Activated CD4-positive, alpha-beta memory T cell treated with anti-CD3 and anti-CD28 coated beads, Interleukin-2, amount 10 ng/mL, durations not matched to agents 7 days and 5 days (primary cell): ENCODE measurements at regions of chr3 and their contacts with region 1.

Region 1: DNA sequence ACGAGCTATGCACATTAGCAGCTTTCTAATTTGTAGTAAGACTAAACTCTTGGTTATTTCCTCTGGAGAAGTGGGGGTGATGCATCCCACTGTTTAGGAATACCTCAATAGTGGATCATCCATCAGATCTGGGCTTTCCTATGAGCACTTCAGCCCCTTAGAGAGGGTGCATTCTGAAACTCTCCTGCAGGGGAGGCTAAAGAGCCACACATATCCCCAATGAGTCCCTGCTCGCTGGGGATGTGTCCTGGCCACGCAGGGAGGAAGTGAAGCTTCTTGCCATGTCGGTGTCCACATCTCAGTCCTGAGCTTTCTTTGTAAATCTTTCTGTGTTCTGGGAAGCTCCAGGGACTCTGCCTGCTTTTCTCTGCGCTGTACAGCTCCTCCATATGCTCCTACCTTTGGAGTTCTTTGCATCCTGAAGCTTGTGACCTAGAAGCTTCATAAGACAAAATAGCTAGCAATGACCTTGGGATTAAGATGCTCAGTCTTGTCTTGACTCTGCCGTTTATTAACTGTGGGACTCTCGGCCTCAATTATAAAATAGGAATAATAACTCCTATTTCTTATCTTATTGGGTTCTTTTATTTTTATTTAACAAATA is 28.3 kb upstream of the MASP1 start:
- DNase-seq: peak; percentile 69
- H3K4me3 Mint-ChIP-seq: no peak overlapping the region
- H3K27ac Mint-ChIP-seq: no peak overlapping the region
- H3K4me1 Mint-ChIP-seq: peaks cover 11% of the 10 kb centered on the region
- H3K27me3 Mint-ChIP-seq: peaks cover 37% of the 10 kb centered on the region

Region 2: GRCh38 chr3:187406927-187407326 is 87.1 kb after region 1 on chr3:
- CTCF ChIA-PET with region 1: interaction called, 13 read pairs
- POLR2A ChIA-PET with region 1: no interaction called
- DNase-seq: no peak
- H3K4me3 Mint-ChIP-seq: no peak overlapping the region
- H3K27ac Mint-ChIP-seq: no peak overlapping the region
- H3K4me1 Mint-ChIP-seq: no peaks in the 10 kb centered on the region
- H3K27me3 Mint-ChIP-seq: peaks cover 22% of the 10 kb centered on the region

Region 3: GRCh38 chr3:187662848-187663409 is 343.1 kb after region 1 on chr3:
- CTCF ChIA-PET with region 1: interaction called, 13 read pairs
- POLR2A ChIA-PET with region 1: no interaction called
- DNase-seq: no peak
- H3K4me3 Mint-ChIP-seq: no peak overlapping the region
- H3K27ac Mint-ChIP-seq: no peak overlapping the region
- H3K4me1 Mint-ChIP-seq: no peaks in the 10 kb centered on the region
- H3K27me3 Mint-ChIP-seq: peaks cover 40% of the 10 kb centered on the region

Region 4: GRCh38 chr3:187679638-187680396 is 360.0 kb after region 1 on chr3:
- CTCF ChIA-PET with region 1: interaction called, 313 read pairs
- POLR2A ChIA-PET with region 1: interaction called, 9 read pairs
- DNase-seq: peak; percentile 68
- H3K4me3 Mint-ChIP-seq: no peak overlapping the region
- H3K27ac Mint-ChIP-seq: no peak overlapping the region
- H3K4me1 Mint-ChIP-seq: peaks cover 2% of the 10 kb centered on the region
- H3K27me3 Mint-ChIP-seq: peaks cover 59% of the 10 kb centered on the region

Region 5: GRCh38 chr3:187714404-187714979 is 394.7 kb after region 1 on chr3:
- CTCF ChIA-PET with region 1: interaction called, 45 read pairs
- POLR2A ChIA-PET with region 1: no interaction called
- DNase-seq: peak; percentile 79
- H3K4me3 Mint-ChIP-seq: no peak overlapping the region
- H3K27ac Mint-ChIP-seq: no peak overlapping the region
- H3K4me1 Mint-ChIP-seq: peaks cover 15% of the 10 kb centered on the region
- H3K27me3 Mint-ChIP-seq: peaks cover 6% of the 10 kb centered on the region